ENCODE measurements at regions of chr16 and their contacts with region 1.

Region 1: GRCh38 chr16:69754469-69755310 is at the start of gene NOB1:
- DNase-seq: peak; percentile 99
- ATAC-seq: peak; percentile 93
- H3K4me3 Mint-ChIP-seq: peak within 1 kb of the TSS; percentile 100
- H3K27ac Mint-ChIP-seq: peak within 1 kb of the TSS; percentile 98
- H3K4me1 Mint-ChIP-seq: peaks cover 11% of the 10 kb centered on the region
- H3K27me3 Mint-ChIP-seq: peaks cover 35% of the 10 kb centered on the region
- CTCF ChIP-seq: peak; percentile 94
- total RNA-seq, gene NOB1: 80.3 to 88.0 TPM (median 81.7 TPM) in 3 replicates

Region 2: GRCh38 chr16:69709456-69710084 is 45.1 kb before region 1 on chr16:
- CTCF ChIA-PET with region 1: interaction called, 36 read pairs
- POLR2A ChIA-PET with region 1: interaction called, 5 read pairs
- DNase-seq: no peak
- ATAC-seq: peak; percentile 63
- H3K4me3 Mint-ChIP-seq: no peak overlapping the region
- H3K27ac Mint-ChIP-seq: no peak overlapping the region; the same call in 1 of the 2 replicates
- H3K4me1 Mint-ChIP-seq: 0 out of 2 replicates have a peak, but pooled peaks cover 6% of the 10 kb centered on the region
- H3K27me3 Mint-ChIP-seq: no peaks in the 10 kb centered on the region
- CTCF ChIP-seq: peak; percentile 53

Region 3: DNA sequence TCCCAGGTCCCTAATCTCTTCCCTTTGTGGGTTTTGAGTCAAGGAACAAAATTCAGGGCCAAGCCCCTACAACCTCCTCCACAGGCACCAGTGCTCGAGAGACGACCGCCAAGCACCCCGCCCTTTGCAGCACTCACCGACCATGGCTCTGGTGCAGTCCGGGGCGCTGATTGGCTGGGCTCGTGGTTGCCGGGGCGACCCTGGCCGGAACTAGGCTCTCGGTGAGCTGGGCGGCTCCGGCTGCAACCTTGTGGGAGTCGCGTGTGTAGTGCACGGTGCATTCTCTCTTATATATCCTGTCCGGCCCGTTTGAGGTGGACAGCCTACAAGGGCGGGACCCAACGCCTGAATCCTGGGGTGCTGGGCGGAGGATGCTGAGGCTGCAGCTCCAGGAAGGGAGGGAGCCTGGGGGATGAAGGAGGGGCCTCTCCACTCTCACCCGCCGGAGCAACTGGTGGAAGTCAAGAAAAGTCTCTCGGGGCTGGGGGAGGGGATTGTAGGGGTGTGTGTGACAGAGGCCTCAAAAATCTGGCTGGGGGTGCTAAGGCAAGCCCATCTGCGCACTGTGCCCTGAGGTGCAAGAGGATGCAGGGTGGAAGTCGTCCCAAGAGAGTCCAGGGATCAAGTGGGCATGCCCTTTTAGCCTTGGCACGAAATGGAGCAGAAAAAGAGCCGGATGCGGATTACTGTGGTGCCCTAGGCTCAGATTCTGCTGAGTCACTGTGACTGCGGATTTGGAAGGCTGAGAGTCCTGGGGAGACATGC is 28.2 kb before region 1 on chr16 and contains the start of gene NQO1:
- CTCF ChIA-PET with region 1: interaction called, 31 read pairs
- POLR2A ChIA-PET with region 1: interaction called, 4 read pairs
- DNase-seq: peak; percentile 96
- ATAC-seq: peak; percentile 95
- H3K4me3 Mint-ChIP-seq: peak within 1 kb of the TSS; percentile 91
- H3K27ac Mint-ChIP-seq: peak within 1 kb of the TSS; percentile 99
- H3K4me1 Mint-ChIP-seq: peaks cover 40% of the 10 kb centered on the region
- H3K27me3 Mint-ChIP-seq: no peaks in the 10 kb centered on the region
- CTCF ChIP-seq: no peak
- total RNA-seq, gene NQO1: 32.6 to 38.9 TPM (median 34.7 TPM) in 3 replicates

Region 4: DNA sequence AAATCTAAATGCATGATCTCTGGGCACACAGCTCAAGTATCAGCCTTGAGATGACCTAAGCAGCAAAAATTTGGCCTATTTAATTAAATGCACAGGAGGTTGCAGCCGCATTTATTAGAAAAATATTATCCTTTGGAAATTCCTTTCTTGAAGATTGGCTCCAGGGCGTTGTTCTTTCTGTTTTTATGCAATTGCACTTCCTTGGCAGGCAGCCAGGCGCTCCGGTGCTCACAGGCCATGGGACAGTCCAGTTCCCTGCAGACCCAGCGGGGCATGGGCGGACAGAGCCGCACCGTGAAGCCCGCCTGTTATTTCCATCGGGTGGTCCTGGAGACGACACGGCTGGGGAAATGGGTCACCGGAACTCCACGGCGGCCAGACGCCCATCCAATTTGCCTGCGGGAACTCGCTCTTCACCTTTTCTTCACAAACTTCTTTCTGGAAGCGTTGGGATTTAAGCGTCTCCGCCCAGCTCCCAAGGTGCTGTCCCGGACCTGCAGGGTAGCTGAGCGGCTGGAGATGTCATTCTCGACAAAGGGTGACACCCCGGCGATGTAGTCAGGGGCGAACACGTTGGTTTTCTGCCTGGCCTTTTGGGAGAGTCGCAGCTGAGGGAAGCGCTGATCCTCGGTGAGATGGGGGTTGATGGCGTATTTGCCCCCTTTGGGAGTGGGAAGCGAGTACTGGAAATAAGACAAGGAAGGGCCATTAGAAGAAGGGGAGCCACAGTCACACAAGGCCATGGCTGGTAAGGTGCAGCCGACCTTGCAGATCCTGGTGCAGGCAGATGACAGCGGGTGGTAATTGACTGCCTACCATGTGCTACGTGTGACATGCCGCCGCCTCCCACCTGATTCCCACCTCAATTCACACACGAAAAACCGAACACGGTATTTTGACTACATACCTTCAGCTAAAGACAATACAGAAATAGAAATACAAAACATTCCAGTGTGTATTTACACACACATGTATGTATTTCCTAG is 12.5 kb before region 1 on chr16:
- CTCF ChIA-PET with region 1: interaction called, 10 read pairs
- POLR2A ChIA-PET with region 1: interaction called, 3 read pairs
- DNase-seq: no peak
- ATAC-seq: no peak
- H3K4me3 Mint-ChIP-seq: no peak overlapping the region
- H3K27ac Mint-ChIP-seq: no peak overlapping the region
- H3K4me1 Mint-ChIP-seq: no peaks in the 10 kb centered on the region
- H3K27me3 Mint-ChIP-seq: no peaks in the 10 kb centered on the region
- CTCF ChIP-seq: no peak

Region 5: DNA sequence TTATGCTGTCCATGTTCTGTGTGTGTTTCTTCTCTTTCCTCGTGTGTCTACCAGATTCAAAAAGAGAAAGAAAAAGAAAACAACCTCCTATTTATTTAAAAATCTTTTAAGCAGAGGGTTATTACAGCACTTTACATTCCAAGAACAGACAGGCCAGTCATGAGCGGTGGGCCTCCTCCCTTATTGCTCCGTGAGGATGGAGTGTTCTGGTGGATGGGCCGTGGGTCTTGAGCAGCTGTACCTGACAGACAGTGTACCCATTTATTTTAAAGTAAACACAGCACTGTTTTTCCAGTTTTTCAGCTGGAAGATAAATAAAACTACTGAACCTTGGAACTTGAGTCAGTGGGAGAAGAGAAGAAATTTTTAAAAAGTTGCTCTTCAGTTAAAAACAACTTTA is 59.9 kb after region 1 on chr16:
- CTCF ChIA-PET with region 1: no interaction called
- POLR2A ChIA-PET with region 1: no interaction called
- DNase-seq: no peak
- ATAC-seq: no peak
- H3K4me3 Mint-ChIP-seq: no peak overlapping the region
- H3K27ac Mint-ChIP-seq: no peak overlapping the region
- H3K4me1 Mint-ChIP-seq: peaks cover 11% of the 10 kb centered on the region
- H3K27me3 Mint-ChIP-seq: no peaks in the 10 kb centered on the region
- CTCF ChIP-seq: no peak

Region 6: DNA sequence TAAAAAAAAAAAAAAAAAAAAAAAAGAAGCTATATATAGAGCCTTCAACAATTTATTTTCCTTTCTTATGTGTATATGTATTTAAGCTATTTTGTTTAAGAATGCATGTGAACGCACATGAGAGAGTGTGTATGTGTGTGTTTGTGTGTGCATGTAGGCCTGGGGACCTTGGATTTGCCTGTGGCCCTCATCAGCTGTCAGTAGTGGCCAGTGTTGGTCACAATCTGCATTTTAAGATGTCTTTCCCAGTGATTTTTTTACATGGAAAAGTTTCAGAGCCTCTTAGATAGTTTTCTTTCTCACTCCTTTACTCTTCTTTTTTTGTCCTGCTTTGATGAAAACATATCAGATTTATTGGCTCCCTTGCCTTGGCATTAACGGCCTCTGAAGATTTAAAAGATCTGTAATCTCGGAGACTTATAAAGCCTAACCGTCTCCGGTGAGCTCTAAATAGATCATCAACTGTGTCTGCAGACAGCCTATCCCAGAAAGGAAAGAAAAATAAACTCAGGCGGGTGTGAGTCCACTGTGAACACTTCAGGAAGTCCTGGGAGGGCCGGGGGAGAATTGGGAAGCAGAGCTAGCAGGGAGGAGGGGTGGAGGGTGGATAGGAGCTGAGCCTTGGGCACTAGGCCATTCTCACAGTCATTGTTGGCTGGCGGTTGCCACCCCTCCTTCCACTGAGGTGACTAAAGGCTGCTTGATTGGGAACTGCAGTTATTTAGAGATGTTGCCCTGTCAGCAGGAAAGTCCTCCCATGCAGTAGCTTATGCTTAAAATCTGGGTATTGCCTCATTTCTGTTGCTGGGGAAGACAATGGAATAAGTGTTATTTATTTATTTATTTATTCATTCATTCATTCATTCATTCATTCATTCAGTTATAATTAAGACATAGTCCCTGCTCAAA is 94.2 kb after region 1 on chr16:
- CTCF ChIA-PET with region 1: no interaction called
- POLR2A ChIA-PET with region 1: no interaction called
- DNase-seq: no peak
- ATAC-seq: no peak
- H3K4me3 Mint-ChIP-seq: no peak overlapping the region
- H3K27ac Mint-ChIP-seq: peak overlapping the region; percentile 41; the same call in 1 of the 2 replicates
- H3K4me1 Mint-ChIP-seq: peaks cover 12% of the 10 kb centered on the region
- H3K27me3 Mint-ChIP-seq: no peaks in the 10 kb centered on the region
- CTCF ChIP-seq: no peak

Measured in WTC11 (cell line).